Psoas muscle (tissue), 8 donors: ENCODE measurements at regions of chr7 and their contacts with region 1.

Region 1: GRCh38 chr7:142782922-142783900 is 12.4 kb downstream of the PRSS2 start:
- DNase-seq: peak; percentile 82 to 92
- ATAC-seq: peak; percentile 94 to 98 (median 96)
- H3K4me3 ChIP-seq: peak overlapping the region; percentile 64
- H3K27ac ChIP-seq: no peak overlapping the region
- H3K4me1 ChIP-seq: no peaks in the 10 kb centered on the region
- H3K27me3 ChIP-seq: no peaks in the 10 kb centered on the region
- CTCF ChIP-seq: peak; percentile 91

Region 2: GRCh38 chr7:142535123-142535779 is 248.0 kb before region 1 on chr7:
- intact Hi-C with region 1: loop called (anchors 5 kb)
- DNase-seq: peak; percentile 67 to 86
- ATAC-seq: peak; percentile 89 to 99 (median 96)
- H3K4me3 ChIP-seq: no peak overlapping the region
- H3K27ac ChIP-seq: no peak overlapping the region
- H3K4me1 ChIP-seq: no peaks in the 10 kb centered on the region
- H3K27me3 ChIP-seq: no peaks in the 10 kb centered on the region
- CTCF ChIP-seq: peak; percentile 80

Region 3: DNA sequence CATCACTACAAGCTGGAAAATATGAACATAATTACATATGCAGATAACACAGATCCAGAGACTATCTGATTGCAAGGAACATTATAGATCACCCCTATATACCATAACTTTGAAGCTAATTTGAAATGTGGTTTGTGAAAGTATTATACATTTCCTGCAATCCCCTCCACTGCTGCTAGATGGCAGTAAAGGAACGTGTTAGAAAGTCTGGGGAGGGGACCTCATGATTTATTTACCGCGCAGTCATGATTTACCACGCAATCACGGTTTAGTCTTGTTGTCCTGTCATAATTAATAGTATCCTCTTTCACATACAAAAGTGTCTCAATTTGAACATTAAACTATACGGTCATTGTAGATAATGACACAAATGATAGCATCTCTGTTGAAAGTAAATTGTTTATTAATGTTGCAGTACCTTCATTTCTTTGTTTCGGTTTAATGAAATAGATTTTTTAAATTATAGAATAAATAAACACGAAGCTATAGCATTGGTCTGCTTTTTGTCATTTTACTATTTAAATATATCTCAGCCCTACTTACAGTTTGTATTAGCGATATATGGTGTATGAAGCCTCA is 179.3 kb before region 1 on chr7:
- intact Hi-C with region 1: loop called (anchors 2 to 10 kb)
- DNase-seq: no peak
- ATAC-seq: peak; percentile 52 to 80 (median 66)
- H3K4me3 ChIP-seq: peak overlapping the region; percentile 24
- H3K27ac ChIP-seq: no peak overlapping the region
- H3K4me1 ChIP-seq: no peaks in the 10 kb centered on the region
- H3K27me3 ChIP-seq: no peaks in the 10 kb centered on the region
- CTCF ChIP-seq: peak; percentile 89

Region 4: DNA sequence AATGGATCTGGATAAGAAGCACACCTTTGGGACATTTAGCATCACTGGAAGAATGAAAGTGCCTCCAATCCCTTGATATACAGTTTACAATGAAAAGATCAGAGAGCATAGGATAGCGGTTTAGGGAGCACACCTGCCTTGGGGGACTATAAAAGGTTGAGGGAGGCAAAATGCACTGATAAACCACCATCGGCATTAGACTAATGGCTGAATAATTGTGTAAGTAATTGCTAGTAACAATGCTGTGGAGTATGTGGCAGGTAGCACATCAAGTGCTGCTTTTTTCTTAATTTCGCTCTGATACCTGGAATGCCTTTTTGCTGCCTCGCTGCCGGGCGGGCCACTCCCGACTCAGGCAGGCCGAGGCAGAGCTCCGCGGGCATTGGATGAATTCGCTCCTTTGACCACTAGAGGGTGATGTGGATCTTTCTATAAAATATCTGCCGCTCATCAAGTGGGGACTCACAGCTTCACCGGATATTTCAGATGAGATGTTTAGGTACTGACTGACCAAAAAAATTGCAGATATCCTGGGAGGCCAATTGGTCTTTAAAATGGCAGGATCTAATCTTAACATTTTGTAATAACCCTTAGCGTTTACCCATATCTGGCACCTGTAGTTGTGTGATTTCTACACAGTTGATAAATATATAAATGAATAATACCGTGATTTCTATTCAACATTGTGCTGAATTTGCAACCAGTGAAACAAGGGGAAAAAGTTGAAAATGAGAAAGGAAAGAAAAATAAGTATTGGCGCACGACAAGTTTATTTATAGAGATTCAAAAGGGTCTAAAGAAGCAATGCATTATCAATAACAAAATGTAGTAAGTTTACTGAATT is 150.7 kb before region 1 on chr7:
- intact Hi-C with region 1: loop called (anchors 1 to 5 kb)
- DNase-seq: no peak
- ATAC-seq: peak; percentile 66 to 89 (median 76)
- H3K4me3 ChIP-seq: no peak overlapping the region
- H3K27ac ChIP-seq: no peak overlapping the region
- H3K4me1 ChIP-seq: peaks cover 7% of the 10 kb centered on the region
- H3K27me3 ChIP-seq: no peaks in the 10 kb centered on the region
- CTCF ChIP-seq: peak; percentile 81

Region 5: DNA sequence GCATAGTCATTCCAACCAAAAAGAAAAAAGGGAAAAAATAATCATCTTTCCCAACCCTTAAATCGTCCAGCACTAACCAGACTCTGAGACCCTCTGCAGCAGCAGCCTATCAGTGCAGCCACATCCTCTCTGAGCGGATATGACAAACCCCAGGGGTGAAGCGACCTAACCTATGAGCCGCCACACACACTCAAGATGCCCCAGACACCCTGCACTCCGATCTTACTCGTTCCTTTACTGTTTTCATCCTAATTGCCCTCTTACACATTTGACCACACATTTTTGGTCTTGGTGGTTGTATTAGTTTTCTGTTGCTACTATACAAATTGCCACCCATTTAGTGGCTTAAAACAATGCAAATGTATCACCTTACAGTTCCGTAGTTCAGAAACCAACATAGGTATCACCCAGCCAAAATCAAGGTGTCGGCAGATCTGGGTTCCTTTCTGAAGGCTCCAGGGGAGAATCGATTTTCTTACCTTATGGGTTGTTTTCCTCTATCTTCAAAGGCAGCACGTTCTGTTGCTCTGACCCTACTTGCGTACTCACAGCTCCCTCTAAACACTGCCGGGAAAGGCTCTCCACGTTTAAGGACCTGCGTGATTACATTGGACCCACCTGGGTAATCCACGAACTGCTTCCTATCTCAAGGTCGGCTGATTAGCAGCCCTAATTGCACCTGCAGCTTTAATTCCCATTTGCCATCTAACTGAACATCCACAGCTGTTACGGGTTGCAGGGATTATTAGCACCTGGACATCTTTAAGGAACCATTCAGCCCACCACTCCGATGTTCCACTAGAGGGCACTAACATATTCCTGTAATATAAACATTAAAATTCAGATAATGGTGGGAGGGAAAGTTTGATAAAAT is 71.2 kb before region 1 on chr7:
- intact Hi-C with region 1: loop called (anchors 2 kb)
- DNase-seq: no peak
- ATAC-seq: peak in 1 of 4 donors; percentile 74
- H3K4me3 ChIP-seq: no peak overlapping the region
- H3K27ac ChIP-seq: no peak overlapping the region
- H3K4me1 ChIP-seq: no peaks in the 10 kb centered on the region
- H3K27me3 ChIP-seq: no peaks in the 10 kb centered on the region
- CTCF ChIP-seq: peak; percentile 43

Region 6: GRCh38 chr7:143454076-143454680 is 671.0 kb after region 1 on chr7:
- intact Hi-C with region 1: no loop called
- DNase-seq: no peak
- ATAC-seq: no peak
- H3K4me3 ChIP-seq: no peak overlapping the region
- H3K27ac ChIP-seq: no peak overlapping the region
- H3K4me1 ChIP-seq: no peaks in the 10 kb centered on the region
- H3K27me3 ChIP-seq: peaks cover 0 to 4% (median 0%) of the 10 kb centered on the region in 3 donors
- CTCF ChIP-seq: no peak